ENCODE measurements at regions of chr3 and their contacts with region 1.

Region 1: DNA sequence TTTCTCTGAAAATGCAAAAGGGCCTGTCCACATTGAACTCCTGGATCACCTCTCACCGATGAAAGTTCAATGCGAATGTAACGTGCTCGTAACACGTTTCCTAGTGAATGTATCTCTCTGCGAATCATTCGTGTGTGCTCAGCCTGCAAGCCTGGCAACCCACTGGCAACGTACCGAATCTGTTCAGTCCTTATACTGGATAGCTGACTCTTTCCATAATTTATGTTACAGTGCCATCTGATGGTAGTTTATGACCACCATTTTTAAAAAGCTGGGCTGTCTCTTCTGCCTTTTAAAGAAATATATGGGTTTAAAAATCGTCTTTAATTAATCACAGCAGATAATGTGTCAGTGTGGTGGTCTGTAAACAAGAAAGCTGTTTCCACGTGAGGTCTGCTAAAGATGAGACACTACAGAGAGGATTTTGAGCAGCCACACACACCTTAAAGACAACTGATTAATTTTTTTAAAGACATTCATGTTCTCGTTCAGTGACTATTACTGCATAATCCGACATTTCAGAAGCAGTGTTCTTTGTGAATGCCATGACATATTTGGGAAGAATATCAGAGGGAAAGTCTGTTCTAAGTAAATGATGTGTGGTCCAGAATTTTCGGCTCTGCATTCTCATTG is 69.4 kb upstream of the FOXP1 start:
- DNase-seq: peak; percentile 41
- ATAC-seq: peak; percentile 72

Region 2: GRCh38 chr3:70546679-70547078 is 1106.2 kb before region 1 on chr3:
- intact Hi-C with region 1: loop called (anchors 5 kb)
- DNase-seq: no peak
- ATAC-seq: no peak

Region 3: DNA sequence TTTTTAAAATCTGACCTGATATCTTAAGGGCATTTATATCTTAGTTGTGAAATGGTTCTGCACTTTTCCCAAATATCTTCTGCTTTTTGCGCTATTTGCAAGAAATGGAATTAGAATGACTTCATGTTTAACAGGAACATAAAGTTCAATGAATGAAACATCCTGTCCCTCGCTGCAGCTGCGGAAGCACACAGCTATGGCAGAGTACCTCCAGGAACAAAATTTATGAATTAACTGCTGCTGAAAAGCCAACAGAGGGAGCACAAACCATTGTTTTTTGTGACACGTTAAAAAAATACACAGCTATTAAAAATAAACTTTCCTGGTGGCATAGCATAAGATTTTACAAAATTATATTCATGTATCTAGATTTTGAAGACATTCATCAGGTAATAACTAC is 936.1 kb before region 1 on chr3:
- intact Hi-C with region 1: loop called (anchors 5 kb)
- DNase-seq: peak; percentile 38
- ATAC-seq: peak; percentile 57

Region 4: GRCh38 chr3:71087143-71088018 is 565.5 kb before region 1 on chr3:
- intact Hi-C with region 1: no loop called
- DNase-seq: no peak
- ATAC-seq: no peak